CD8-positive, alpha-beta T cell (primary cell): ENCODE measurements at regions of chr6 and their contacts with region 1.

Region 1: GRCh38 chr6:75532515-75532914 is 38.9 kb upstream of the FILIP1 start:
- DNase-seq: no peak
- ATAC-seq: no peak
- H3K4me3 ChIP-seq: no peak overlapping the region
- H3K4me3 Mint-ChIP-seq: no peak overlapping the region
- H3K27ac ChIP-seq: no peak overlapping the region
- H3K27ac Mint-ChIP-seq: no peak overlapping the region
- H3K4me1 ChIP-seq: no peaks in the 10 kb centered on the region
- H3K4me1 Mint-ChIP-seq: no peaks in the 10 kb centered on the region
- H3K27me3 ChIP-seq: peaks cover 3% of the 10 kb centered on the region in 2 experiments
- H3K27me3 Mint-ChIP-seq: peaks cover 32% of the 10 kb centered on the region
- CTCF ChIP-seq: no peak

Region 2: GRCh38 chr6:73854998-73855718 is 1677.4 kb before region 1 on chr6:
- CTCF ChIA-PET with region 1: no interaction called
- POLR2A ChIA-PET with region 1: no interaction called
- intact Hi-C with region 1: loop called (anchors 5 to 10 kb)
- DNase-seq: peak in 3 of 9 experiments; percentile 27 to 61 (median 57)
- ATAC-seq: no peak
- H3K4me3 ChIP-seq: no peak overlapping the region
- H3K4me3 Mint-ChIP-seq: no peak overlapping the region
- H3K27ac ChIP-seq: no peak overlapping the region
- H3K27ac Mint-ChIP-seq: no peak overlapping the region
- H3K4me1 ChIP-seq: no peaks in the 10 kb centered on the region
- H3K4me1 Mint-ChIP-seq: no peaks in the 10 kb centered on the region
- H3K27me3 ChIP-seq: no peaks in the 10 kb centered on the region
- H3K27me3 Mint-ChIP-seq: no peaks in the 10 kb centered on the region
- CTCF ChIP-seq: peak; percentile 64

Region 3: GRCh38 chr6:74431873-74432580 is 1100.5 kb before region 1 on chr6:
- CTCF ChIA-PET with region 1: no interaction called
- POLR2A ChIA-PET with region 1: no interaction called
- intact Hi-C with region 1: no loop called
- DNase-seq: no peak
- ATAC-seq: no peak
- H3K4me3 ChIP-seq: no peak overlapping the region
- H3K4me3 Mint-ChIP-seq: no peak overlapping the region
- H3K27ac ChIP-seq: no peak overlapping the region
- H3K27ac Mint-ChIP-seq: no peak overlapping the region
- H3K4me1 ChIP-seq: no peaks in the 10 kb centered on the region
- H3K4me1 Mint-ChIP-seq: no peaks in the 10 kb centered on the region
- H3K27me3 ChIP-seq: no peaks in the 10 kb centered on the region
- H3K27me3 Mint-ChIP-seq: no peaks in the 10 kb centered on the region
- CTCF ChIP-seq: no peak